ENCODE measurements at regions of chr17 and their contacts with region 1.

Region 1: DNA sequence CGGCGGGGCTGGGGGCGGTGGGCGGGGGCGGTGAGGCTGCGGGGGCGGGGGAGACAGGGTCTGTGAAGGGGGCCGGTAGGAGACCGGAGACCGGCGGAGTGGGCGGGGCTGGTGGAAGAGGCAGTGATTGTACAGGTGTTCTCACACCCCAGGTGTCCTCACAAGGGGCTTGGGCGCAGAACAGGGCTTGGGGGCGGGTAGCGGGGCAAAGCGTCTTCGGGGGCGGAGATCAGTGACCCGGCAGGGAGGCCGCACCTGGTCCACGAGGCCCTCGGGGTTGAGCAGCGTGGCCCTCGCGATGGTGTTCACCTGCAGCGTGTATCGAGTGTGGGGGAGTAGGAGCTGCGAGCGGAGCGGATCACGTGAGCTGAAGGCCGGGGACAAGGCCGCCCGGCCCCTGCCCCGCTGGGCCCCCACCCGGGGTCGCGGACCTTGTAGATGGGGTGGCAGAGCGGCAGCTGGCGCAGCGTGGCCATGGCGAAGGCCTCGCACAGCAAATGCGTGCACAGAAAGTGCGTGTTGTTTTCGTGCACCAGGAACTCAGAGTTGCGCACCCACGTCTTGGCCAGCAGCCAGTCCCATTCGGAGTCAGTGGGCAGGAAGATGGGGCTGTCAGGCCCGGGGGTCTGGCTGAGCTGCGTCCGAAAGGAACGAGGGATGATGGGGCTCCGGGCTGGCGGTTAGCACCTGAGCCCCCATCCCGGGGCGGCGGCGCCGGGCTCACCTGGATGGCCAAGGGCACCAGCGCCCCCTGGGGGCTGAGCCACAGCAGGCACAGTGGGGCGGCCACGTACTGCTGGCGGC is 8.5 kb downstream of the ALOXE3 start:
- DNase-seq: no peak
- ATAC-seq: peak; percentile 89
- H3K4me3 ChIP-seq: peak overlapping the region in 1 of 3 experiments; percentile 23; a peak in 1 of 6 replicates
- H3K27ac ChIP-seq: no peak overlapping the region
- H3K4me1 ChIP-seq: no peaks in the 10 kb centered on the region
- H3K27me3 ChIP-seq: peaks cover 9 to 62% of the 10 kb centered on the region in 2 experiments
- CTCF ChIP-seq: peak; percentile 90
- EP300 ChIP-seq: no peak
- POLR2A ChIP-seq: no peak
- RAD21 ChIP-seq: peak; percentile 61

Region 2: GRCh38 chr17:8091033-8091687 is 18.7 kb before region 1 on chr17:
- CTCF ChIA-PET with region 1: interaction called, 11 read pairs
- POLR2A ChIA-PET with region 1: no interaction called
- in situ Hi-C with region 1: no loop called
- intact Hi-C with region 1: no loop called
- DNase-seq: no peak
- ATAC-seq: no peak
- H3K4me3 ChIP-seq: no peak overlapping the region
- H3K27ac ChIP-seq: no peak overlapping the region
- H3K4me1 ChIP-seq: no peaks in the 10 kb centered on the region; the same call in 1 of the 2 replicates
- H3K27me3 ChIP-seq: peaks cover 9 to 71% of the 10 kb centered on the region in 2 experiments; a peak in 4 of 5 replicates
- CTCF ChIP-seq: no peak
- EP300 ChIP-seq: no peak
- POLR2A ChIP-seq: no peak
- RAD21 ChIP-seq: no peak

Region 3: DNA sequence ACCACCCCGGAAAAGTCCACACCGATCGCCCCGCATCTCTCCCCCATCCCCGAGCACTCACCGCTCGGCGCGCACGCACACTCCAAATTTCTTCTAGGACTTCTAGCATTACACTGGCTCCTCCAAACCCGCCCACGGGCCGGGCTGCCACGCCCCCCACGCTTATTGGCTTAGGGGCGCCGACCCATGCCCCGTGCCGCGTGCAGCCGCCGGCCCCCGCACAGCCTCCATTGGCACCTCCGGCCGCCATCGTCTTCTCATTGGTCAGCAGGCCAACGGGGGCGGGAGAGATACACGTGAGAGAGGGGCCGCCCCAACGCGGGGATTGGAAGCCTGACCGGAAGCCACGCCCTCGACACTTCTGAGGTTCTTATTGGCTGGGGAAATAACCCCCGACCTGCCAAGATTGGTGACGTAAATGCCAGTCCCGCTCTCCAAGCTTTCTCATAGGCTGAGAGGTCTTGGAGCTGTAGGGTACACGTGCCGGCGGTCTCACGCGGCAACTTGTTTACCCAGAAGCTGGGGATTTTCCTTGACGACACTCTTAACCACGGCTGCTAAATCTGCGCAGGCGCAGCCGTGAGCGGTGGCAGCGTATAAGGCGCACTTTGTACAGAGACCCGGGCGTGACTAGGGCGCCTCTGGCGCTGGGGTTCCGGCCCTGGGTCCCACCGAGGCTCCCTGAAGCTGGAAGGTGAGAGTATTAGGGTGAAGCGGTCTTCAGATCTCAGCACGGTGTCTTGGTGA is 46.6 kb after region 1 on chr17:
- CTCF ChIA-PET with region 1: no interaction called
- POLR2A ChIA-PET with region 1: no interaction called
- in situ Hi-C with region 1: no loop called
- intact Hi-C with region 1: no loop called
- DNase-seq: peak; percentile 98
- ATAC-seq: peak; percentile 62
- H3K4me3 ChIP-seq: peak overlapping the region; percentile 58 to 70 (median 63); a peak in 5 of 6 replicates
- H3K27ac ChIP-seq: peak overlapping the region; percentile 86
- H3K4me1 ChIP-seq: peaks cover 71% of the 10 kb centered on the region
- H3K27me3 ChIP-seq: no peaks in the 10 kb centered on the region
- CTCF ChIP-seq: peak; percentile 25
- EP300 ChIP-seq: peak in 1 of 2 experiments; percentile 66; a peak in 2 of 4 replicates
- POLR2A ChIP-seq: peak; percentile 63 to 70
- RAD21 ChIP-seq: no peak

Measured in HepG2 (cell line).